Activated B cell treated with CpG ODN at 0.5 μM for 24 hours (primary cell): ENCODE measurements at regions of chr4 and their contacts with region 1.

Region 1: GRCh38 chr4:19254486-19254885 is 997.2 kb upstream of the SLIT2 start:
- DNase-seq: no peak
- ATAC-seq: no peak
- H3K4me3 Mint-ChIP-seq: no peak overlapping the region
- H3K27ac Mint-ChIP-seq: no peak overlapping the region
- H3K4me1 Mint-ChIP-seq: no peaks in the 10 kb centered on the region
- H3K27me3 Mint-ChIP-seq: no peaks in the 10 kb centered on the region
- CTCF ChIP-seq: no peak

Region 2: GRCh38 chr4:19319607-19320006 is 65.1 kb after region 1 on chr4:
- CTCF ChIA-PET with region 1: no interaction called
- POLR2A ChIA-PET with region 1: no interaction called
- intact Hi-C with region 1: no loop called
- DNase-seq: no peak
- ATAC-seq: no peak
- H3K4me3 Mint-ChIP-seq: no peak overlapping the region
- H3K27ac Mint-ChIP-seq: no peak overlapping the region
- H3K4me1 Mint-ChIP-seq: no peaks in the 10 kb centered on the region
- H3K27me3 Mint-ChIP-seq: no peaks in the 10 kb centered on the region
- CTCF ChIP-seq: no peak

Region 3: DNA sequence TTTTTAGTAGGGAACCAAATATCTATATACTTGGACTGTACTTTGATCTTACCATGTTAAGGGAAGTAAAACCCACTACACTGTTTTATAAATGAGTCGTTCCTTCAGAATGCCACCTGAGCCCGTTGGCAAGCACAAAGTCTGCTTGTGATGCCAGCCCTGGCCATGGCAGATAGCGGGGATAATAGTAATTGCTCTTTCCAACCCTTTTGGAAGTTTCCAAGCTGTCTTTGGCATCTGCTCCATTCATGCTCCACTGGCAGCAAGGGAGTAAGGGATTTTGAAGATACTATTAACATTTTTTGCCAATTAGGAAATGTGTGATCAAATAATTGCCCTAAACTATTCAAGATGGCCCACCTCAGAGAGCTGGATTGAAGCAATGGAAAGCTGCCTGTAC is 308.0 kb after region 1 on chr4:
- CTCF ChIA-PET with region 1: no interaction called
- POLR2A ChIA-PET with region 1: no interaction called
- intact Hi-C with region 1: loop called (anchors 10 kb)
- DNase-seq: no peak
- ATAC-seq: no peak
- H3K4me3 Mint-ChIP-seq: no peak overlapping the region
- H3K27ac Mint-ChIP-seq: no peak overlapping the region
- H3K4me1 Mint-ChIP-seq: no peaks in the 10 kb centered on the region
- H3K27me3 Mint-ChIP-seq: no peaks in the 10 kb centered on the region
- CTCF ChIP-seq: no peak

Region 4: GRCh38 chr4:20572976-20573375 is 1318.5 kb after region 1 on chr4:
- CTCF ChIA-PET with region 1: no interaction called
- POLR2A ChIA-PET with region 1: no interaction called
- intact Hi-C with region 1: no loop called
- DNase-seq: no peak
- ATAC-seq: no peak
- H3K4me3 Mint-ChIP-seq: no peak overlapping the region
- H3K27ac Mint-ChIP-seq: no peak overlapping the region
- H3K4me1 Mint-ChIP-seq: no peaks in the 10 kb centered on the region
- H3K27me3 Mint-ChIP-seq: no peaks in the 10 kb centered on the region
- CTCF ChIP-seq: no peak